Heart right ventricle (tissue), 16 donors: ENCODE measurements at regions of chr4 and their contacts with region 1.

Region 1: DNA sequence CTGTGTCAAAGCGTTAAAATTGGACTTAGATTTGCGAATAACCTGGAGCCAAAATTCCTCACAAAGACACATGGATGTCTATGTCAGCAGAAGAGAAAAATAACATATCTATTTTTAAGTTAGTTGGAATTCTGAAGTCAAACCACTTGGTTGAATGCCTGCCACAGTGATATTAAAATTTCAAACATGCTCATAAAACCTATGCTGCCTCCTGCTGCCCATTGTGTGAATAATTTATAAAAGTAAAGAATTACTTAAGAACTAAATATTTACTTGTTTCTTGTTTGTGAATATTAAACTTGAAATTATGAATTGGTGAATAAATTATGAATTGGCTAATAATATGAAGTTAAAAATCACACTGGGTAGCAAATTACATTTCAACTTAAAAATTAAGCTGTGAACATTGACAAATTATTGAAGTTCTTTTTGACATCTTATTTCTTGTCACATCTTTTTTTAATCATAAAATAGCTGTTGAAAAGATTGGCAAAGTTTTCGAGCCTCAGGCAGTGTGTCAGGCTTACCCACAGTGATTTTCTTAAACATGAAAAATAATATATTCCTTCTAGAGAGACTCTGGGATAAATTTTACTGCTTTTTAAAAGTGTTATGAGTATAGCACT is 35.4 kb downstream of the FABP2 start:
- DNase-seq: peak in 1 of 2 donors; percentile 53
- ATAC-seq: peak in 7 of 8 donors; percentile 39 to 78 (median 63)
- H3K4me3 ChIP-seq: no peak overlapping the region
- H3K27ac ChIP-seq: peak overlapping the region in 7 of 10 donors; percentile 10 to 75 (median 59)
- H3K4me1 ChIP-seq: peaks cover 0 to 51% (median 33%) of the 10 kb centered on the region in 9 donors
- H3K27me3 ChIP-seq: no peaks in the 10 kb centered on the region
- CTCF ChIP-seq: peak; percentile 30 to 81 (median 71)

Region 2: DNA sequence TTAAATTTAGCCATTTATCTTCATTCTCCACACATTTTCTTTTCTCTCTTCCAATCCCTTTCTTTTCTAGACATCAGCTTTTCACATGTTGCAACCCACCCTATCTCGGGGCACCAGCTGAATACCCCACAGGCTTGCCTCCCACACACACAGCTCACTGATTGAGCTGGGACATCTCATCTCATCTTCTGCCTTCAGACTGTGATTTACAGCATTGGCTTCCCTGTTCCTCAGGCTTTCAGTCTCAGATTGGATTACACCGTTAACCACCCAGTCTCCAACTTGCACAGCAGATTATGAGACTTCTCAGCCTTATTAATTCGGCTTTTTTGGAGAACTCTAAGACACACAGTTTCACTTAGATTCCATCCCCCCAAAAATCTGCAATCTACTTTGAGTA is 1027.4 kb before region 1 on chr4:
- intact Hi-C with region 1: loop called in 1 of 10 experiments (anchors 5 kb)
- DNase-seq: no peak
- ATAC-seq: no peak
- H3K4me3 ChIP-seq: no peak overlapping the region
- H3K27ac ChIP-seq: no peak overlapping the region
- H3K4me1 ChIP-seq: no peaks in the 10 kb centered on the region
- H3K27me3 ChIP-seq: peaks cover 0 to 17% (median 6%) of the 10 kb centered on the region in 7 donors
- CTCF ChIP-seq: no peak

Region 3: DNA sequence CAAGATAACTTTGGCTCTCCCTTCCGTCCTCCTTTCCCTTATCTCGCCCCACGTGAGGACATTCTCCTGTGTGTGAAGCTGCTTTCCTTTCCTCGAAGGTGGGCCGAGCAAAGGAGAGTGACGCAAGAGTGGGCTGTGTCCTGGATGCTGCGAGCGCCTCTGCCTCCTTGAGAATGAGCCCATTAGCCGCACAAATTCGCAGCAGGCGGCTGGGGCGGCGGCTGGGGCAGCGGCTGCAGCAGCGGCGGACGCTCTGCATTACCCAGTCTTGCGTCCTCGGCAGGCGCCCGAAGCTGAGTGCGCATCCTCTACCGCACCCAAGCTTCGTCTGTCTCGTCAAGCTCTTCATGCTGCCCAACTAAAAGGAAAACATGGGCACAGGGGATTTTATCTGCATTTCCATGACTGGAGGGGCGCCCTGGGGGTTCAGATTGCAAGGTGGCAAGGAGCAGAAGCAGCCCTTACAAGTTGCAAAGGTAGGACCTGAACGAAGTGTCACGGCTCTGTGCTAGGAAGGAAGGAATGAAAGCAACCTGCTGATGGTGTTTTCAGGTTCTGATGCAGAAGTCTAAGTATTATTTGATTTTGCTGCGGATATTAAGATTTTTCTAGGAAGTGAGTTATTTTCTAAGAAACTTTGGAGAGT is 397.7 kb before region 1 on chr4 and contains the start of gene SYNPO2:
- intact Hi-C with region 1: loop called in 1 of 10 experiments (anchors 10 kb)
- DNase-seq: peak; percentile 81 to 84
- ATAC-seq: peak; percentile 84 to 94 (median 90)
- H3K4me3 ChIP-seq: peak within 1 kb of the TSS; percentile 34 to 74 (median 66)
- H3K27ac ChIP-seq: peak within 1 kb of the TSS; percentile 78 to 93 (median 85)
- H3K4me1 ChIP-seq: peaks cover 0 to 19% (median 15%) of the 10 kb centered on the region in 9 donors
- H3K27me3 ChIP-seq: peaks cover 0 to 19% (median 0%) of the 10 kb centered on the region in 7 donors
- CTCF ChIP-seq: no peak
- total RNA-seq, gene SYNPO2: 197 to 405 (median 267) TPM

Region 4: DNA sequence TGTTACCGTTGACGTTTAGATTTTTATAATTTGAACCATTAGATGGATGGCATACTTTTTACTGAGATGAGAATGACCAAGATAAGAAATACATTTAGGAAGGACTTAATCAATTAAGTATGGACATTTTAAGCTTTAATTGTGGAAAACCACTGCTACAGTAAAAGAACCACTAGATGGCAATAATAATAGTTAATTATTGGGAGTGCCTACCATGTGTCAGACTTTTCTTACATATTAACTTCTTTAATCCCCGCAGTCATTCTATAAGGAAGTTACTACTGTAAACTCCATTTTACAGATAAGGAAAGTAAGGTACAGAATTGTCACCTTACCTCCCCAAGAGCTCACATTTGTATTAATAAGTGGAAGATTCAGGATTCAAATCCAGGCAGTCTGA is 199.4 kb before region 1 on chr4:
- intact Hi-C with region 1: loop called in 2 of 10 experiments (anchors 10 kb)
- DNase-seq: no peak
- ATAC-seq: peak in 5 of 8 donors; percentile 42 to 67 (median 52)
- H3K4me3 ChIP-seq: no peak overlapping the region
- H3K27ac ChIP-seq: peak overlapping the region in 1 of 10 donors; percentile 18
- H3K4me1 ChIP-seq: peaks cover 0 to 20% (median 7%) of the 10 kb centered on the region in 9 donors
- H3K27me3 ChIP-seq: no peaks in the 10 kb centered on the region
- CTCF ChIP-seq: peak; percentile 14 to 55 (median 42)

Region 5: DNA sequence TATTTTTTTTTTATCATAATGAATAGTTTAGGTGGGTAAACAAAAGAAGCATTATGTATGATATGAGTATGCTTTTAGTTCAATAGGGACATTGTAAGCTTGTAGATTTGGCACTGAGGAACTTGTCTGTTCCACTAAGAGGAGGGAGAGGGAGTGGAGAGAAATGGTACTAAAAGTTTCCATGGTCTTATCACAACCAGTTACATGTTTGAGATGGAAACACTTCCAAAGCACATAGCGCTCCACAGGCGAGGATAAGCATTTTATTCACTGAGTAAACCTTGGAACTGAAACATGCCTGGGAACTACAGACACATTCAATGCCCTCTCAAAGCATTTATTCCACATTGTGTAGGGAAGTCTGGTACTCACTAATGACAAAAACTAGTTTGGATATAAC is 135.3 kb before region 1 on chr4:
- intact Hi-C with region 1: loop called in 2 of 10 experiments (anchors 10 kb)
- DNase-seq: peak in 1 of 2 donors; percentile 46
- ATAC-seq: peak; percentile 57 to 95 (median 90)
- H3K4me3 ChIP-seq: no peak overlapping the region
- H3K27ac ChIP-seq: peak overlapping the region; percentile 2 to 81 (median 68)
- H3K4me1 ChIP-seq: peaks cover 0 to 58% (median 15%) of the 10 kb centered on the region in 9 donors
- H3K27me3 ChIP-seq: no peaks in the 10 kb centered on the region
- CTCF ChIP-seq: peak in 1 of 9 donors; percentile 13

Region 6: DNA sequence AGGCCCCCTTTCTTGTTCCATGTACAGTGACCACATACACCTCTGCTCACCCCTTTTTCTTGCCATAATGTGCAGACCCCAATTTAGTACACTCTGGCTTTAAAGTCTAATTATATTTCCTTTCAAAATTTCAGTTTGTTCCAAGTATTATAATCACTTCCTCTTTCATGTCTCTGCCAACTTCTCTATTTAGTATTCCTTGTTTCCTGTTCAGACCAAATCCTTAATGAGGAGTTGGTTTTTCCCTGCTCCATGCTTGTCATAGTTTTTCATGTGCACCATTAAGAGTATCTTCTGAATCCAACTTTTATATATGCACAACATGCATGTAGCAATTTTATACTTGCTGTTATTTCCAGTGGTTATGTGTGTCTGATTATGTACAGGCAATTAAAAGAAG is 41.7 kb before region 1 on chr4:
- intact Hi-C with region 1: loop called in 1 of 10 experiments (anchors 5 kb)
- DNase-seq: no peak
- ATAC-seq: peak in 3 of 8 donors; percentile 36 to 49 (median 42)
- H3K4me3 ChIP-seq: no peak overlapping the region
- H3K27ac ChIP-seq: peak overlapping the region in 2 of 10 donors; percentile 11 to 37
- H3K4me1 ChIP-seq: peaks cover 0 to 34% (median 22%) of the 10 kb centered on the region in 9 donors
- H3K27me3 ChIP-seq: no peaks in the 10 kb centered on the region
- CTCF ChIP-seq: no peak

Region 7: GRCh38 chr4:119471259-119471658 is 184.8 kb after region 1 on chr4:
- intact Hi-C with region 1: no loop called
- DNase-seq: no peak
- ATAC-seq: no peak
- H3K4me3 ChIP-seq: no peak overlapping the region
- H3K27ac ChIP-seq: no peak overlapping the region
- H3K4me1 ChIP-seq: peaks cover 0 to 8% (median 0%) of the 10 kb centered on the region in 9 donors
- H3K27me3 ChIP-seq: no peaks in the 10 kb centered on the region
- CTCF ChIP-seq: no peak